ENCODE measurements at regions of chr2 and their contacts with region 1.

Region 1: DNA sequence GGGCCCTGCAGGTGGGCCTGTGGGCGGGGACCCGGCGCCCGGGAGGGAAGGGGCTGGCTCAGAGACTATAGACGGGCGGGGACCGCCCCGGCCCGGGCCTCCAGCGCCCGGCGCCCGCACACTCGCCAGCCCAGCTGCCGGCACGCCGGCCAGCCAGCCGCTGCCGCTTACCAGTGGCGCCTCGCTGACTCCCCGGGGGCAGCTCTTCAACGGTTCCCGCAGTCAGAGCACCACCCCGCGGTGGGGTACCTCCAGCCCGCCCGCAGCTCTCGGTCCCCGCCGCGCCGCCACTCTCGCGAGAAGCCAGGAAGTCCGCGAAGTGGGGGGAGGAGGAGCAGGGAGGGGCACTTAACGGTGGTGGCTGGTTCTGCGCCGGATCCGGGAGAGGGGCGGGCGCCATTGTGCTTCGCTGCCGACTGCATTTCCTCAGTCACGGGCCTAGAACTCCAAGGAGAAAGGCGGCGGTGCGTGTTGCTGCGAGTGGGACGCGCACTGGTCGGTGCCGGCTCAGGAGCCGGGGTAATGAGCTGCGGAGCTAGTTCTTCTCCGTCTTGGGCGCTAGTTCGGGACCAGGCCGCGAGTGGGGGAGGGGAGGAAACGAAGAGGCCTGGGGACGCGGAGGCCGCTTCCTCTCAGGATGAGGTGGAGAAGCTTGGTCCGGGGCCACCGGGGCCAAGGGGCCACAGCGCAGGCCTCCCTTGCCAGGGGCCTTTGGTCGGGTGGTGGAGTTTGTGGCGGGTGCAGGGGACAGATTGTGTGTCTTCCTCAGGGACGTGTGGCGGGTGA is at the start of gene MARCHF7:
- DNase-seq: peak; percentile 97
- H3K4me3 Mint-ChIP-seq: peak within 1 kb of the TSS; percentile 99
- H3K27ac Mint-ChIP-seq: peak within 1 kb of the TSS; percentile 99
- H3K4me1 Mint-ChIP-seq: peaks cover 36% of the 10 kb centered on the region
- H3K27me3 Mint-ChIP-seq: no peaks in the 10 kb centered on the region
- total RNA-seq, gene MARCHF7: 80.0 and 83.1 TPM in 2 replicates

Region 2: GRCh38 chr2:159286709-159287441 is 425.5 kb before region 1 on chr2:
- intact Hi-C with region 1: loop called (anchors 1 kb)
- DNase-seq: peak; percentile 94
- H3K4me3 Mint-ChIP-seq: peak overlapping the region; percentile 79
- H3K27ac Mint-ChIP-seq: peak overlapping the region; percentile 78
- H3K4me1 Mint-ChIP-seq: peaks cover 22% of the 10 kb centered on the region
- H3K27me3 Mint-ChIP-seq: no peaks in the 10 kb centered on the region

Region 3: DNA sequence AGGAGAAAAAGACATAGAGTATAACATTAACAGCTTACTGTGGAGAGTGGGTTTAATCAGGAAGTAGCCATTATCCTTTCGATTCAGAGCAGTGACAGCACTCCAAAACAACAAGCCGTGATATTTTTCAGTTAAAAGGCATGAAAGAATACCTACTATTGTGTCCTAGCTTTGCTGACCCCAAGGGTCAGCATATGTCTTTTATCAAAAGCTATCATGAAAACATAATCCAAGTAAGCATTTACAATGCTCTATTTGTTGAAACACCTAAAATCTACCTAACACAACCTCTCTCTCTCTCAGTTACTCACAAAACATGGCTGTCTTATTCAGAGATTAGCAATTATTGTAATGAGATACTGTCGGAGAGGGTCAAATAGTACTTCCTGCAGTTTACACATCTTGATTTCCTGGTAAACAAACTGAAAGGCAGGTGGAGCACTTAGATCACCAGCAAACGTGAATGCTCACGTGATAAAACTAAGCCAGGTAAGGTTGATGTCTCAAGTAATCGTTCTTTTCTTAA is 196.0 kb before region 1 on chr2:
- intact Hi-C with region 1: loop called (anchors 5 kb)
- DNase-seq: no peak
- H3K4me3 Mint-ChIP-seq: peak overlapping the region; percentile 61
- H3K27ac Mint-ChIP-seq: peak overlapping the region; percentile 71
- H3K4me1 Mint-ChIP-seq: peaks cover 18% of the 10 kb centered on the region
- H3K27me3 Mint-ChIP-seq: peaks cover 1% of the 10 kb centered on the region

Region 4: DNA sequence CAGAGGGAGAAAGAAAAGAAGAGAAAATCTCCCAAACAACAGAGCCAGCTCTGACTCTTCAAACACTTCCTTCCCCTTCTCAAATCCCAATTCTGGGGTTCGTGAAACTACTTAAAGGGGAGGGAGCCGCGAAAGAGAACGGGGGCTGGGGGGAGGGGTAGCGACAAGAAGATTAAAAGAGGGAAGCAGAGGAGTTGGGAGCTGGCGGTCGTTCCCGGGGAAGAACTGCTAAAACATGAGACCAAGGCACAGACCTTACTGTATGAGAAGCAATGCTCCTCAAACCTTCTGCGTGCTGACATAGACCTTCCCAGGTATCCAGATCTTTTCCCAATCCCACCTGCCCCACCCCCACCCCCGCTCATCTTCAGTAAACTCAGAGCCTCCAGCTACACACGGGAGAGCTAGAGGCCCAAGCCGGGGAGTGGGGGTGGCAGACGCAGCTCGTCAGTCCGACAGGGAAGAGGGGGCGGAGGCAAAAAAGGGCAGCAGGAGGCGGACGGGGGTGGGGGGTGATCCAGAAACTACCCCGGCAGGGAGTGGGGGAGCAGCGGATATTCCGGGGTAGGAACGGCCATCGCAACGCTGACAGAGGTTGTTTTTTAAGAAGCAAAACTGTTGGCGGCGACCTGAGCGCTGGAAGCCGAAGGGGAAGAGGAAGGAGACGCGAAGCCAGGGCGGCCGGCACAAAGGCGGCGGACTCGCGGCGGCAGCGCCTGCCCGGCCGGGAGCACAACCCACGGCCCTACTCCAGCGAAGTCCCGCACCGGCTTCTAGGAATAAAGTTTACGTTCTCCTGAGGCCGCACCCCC is 97.0 kb before region 1 on chr2:
- intact Hi-C with region 1: loop called (anchors 1 kb)
- DNase-seq: peak; percentile 11
- H3K4me3 Mint-ChIP-seq: peak overlapping the region; percentile 82
- H3K27ac Mint-ChIP-seq: peak overlapping the region; percentile 69
- H3K4me1 Mint-ChIP-seq: peaks cover 10% of the 10 kb centered on the region
- H3K27me3 Mint-ChIP-seq: peaks cover 41% of the 10 kb centered on the region

Region 5: GRCh38 chr2:159744363-159744762 is 32.0 kb after region 1 on chr2:
- intact Hi-C with region 1: loop called (anchors 5 kb)
- DNase-seq: no peak
- H3K4me3 Mint-ChIP-seq: no peak overlapping the region
- H3K27ac Mint-ChIP-seq: no peak overlapping the region
- H3K4me1 Mint-ChIP-seq: peaks cover 7% of the 10 kb centered on the region
- H3K27me3 Mint-ChIP-seq: no peaks in the 10 kb centered on the region

Region 6: DNA sequence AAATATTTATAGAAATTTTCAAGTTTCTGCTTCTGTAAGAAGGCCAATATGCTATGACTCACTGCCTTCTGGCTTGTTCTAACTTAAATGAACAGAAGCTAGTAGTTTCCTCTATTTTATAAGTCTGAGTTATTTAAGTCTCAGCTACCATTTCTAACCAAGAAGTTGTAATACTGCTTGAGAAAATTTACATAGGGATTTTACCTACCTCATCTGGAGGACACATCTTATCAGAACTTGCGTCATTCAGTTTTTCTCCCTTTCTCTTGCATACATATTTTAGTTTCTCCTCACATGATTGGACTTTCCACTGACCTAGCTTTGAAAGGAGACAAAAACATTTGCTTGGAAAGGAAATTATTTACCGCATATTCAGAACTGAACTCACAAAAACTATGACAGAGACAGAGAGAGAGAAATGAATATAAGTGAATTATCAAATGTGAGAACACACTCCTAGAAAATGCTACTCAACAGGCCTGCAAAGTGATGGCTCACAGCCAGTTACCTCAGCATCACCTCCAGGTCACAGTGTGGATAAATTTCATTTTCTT is 166.8 kb after region 1 on chr2:
- intact Hi-C with region 1: loop called (anchors 2 kb)
- DNase-seq: no peak
- H3K4me3 Mint-ChIP-seq: peak overlapping the region; percentile 32
- H3K27ac Mint-ChIP-seq: peak overlapping the region; percentile 86
- H3K4me1 Mint-ChIP-seq: peaks cover 35% of the 10 kb centered on the region
- H3K27me3 Mint-ChIP-seq: no peaks in the 10 kb centered on the region

Region 7: DNA sequence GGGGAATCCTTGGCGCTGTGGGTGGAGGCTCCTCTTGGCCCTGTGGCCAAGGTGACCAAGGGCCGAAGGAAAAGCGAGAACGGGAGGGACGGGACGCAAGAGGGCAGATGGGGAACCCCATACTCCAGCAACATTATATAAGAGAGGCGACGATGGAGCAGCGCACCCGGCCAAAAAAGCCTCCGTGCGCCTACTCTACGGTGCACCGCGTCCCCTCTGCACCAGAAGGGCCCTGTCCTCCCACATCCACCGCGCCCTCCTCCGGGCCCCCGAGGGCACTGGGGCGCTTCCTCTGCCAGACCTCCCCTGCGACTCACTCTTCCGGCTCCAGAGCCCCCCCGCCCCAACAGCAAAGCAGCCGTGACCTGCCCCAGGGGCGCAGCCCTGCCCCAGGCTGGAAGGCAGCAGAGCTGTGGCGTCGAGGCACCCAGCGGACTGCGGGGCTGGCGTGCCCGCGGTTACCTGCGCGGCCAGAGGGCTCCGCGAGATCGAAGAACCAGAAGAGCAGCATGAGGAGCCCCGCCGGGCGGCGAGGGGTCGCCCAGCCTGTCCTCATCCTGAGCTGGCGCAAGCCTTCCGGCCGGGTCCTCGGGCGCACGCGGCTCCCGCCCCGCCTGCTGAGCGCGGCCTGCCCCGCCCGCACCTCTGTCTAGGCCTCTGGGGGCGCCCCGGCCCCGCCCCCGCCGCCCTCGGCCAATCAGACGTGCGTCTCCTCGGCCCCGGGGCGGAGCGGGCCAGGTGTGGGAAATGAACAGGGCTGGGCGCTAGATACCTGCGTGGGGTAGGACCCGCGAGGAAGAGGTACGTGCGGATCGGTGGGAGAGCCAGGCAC is 192.0 kb after region 1 on chr2:
- intact Hi-C with region 1: loop called (anchors 5 kb)
- DNase-seq: peak; percentile 71
- H3K4me3 Mint-ChIP-seq: peak within 1 kb of the TSS; percentile 94
- H3K27ac Mint-ChIP-seq: peak within 1 kb of the TSS; percentile 93
- H3K4me1 Mint-ChIP-seq: peaks cover 61% of the 10 kb centered on the region
- H3K27me3 Mint-ChIP-seq: no peaks in the 10 kb centered on the region

Region 8: GRCh38 chr2:160062292-160063005 is 350.1 kb after region 1 on chr2 and contains the start of gene PLA2R1:
- intact Hi-C with region 1: no loop called
- DNase-seq: no peak
- H3K4me3 Mint-ChIP-seq: no peak within 1 kb of the TSS
- H3K27ac Mint-ChIP-seq: no peak within 1 kb of the TSS
- H3K4me1 Mint-ChIP-seq: peaks cover 2% of the 10 kb centered on the region
- H3K27me3 Mint-ChIP-seq: peaks cover 50% of the 10 kb centered on the region
- total RNA-seq, gene PLA2R1: not detected in 2 replicates